WTC11 (cell line): ENCODE measurements at regions of chr12 and their contacts with region 1.

Region 1: DNA sequence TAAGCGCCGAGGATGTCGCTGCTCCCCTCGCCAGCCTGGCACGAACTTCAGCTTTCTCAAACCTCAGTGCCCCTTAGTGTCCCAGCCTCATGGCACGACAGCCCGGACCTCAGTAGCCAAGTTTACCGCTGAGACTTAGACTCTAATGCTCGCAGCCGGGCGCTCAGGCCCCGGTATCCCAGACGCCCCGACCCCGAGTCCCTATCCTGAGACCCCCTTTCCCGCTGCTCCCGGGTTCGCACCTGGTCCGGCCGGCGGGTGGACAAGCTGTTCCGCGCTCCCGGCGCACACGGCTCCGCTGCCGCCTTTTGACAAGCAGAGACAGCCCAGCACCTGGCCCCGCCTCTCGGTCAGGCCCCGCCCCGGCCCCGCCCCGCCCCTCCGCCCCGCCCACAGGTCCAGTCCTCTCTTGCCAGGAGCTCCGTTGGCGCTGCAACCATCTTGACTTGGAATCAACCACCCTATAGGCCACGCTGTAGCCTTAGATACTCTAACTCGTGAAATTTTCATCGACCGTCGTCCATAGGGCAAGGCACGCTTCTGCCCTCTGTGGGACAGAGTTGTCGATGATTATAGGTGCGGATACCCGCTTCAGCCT is at the start of gene VDR:
- DNase-seq: peak; percentile 83
- ATAC-seq: peak; percentile 86
- H3K4me3 Mint-ChIP-seq: peak within 1 kb of the TSS; percentile 73
- H3K27ac Mint-ChIP-seq: peak within 1 kb of the TSS; percentile 89
- H3K4me1 Mint-ChIP-seq: peaks cover 14% of the 10 kb centered on the region
- H3K27me3 Mint-ChIP-seq: peaks cover 92% of the 10 kb centered on the region
- CTCF ChIP-seq: no peak
- total RNA-seq, gene VDR: 0.76 to 1.3 TPM (median 0.76 TPM) in 3 replicates

Region 2: GRCh38 chr12:47870175-47870781 is 34.5 kb before region 1 on chr12:
- CTCF ChIA-PET with region 1: interaction called, 29 read pairs
- POLR2A ChIA-PET with region 1: no interaction called
- DNase-seq: peak; percentile 68
- ATAC-seq: peak; percentile 100
- H3K4me3 Mint-ChIP-seq: no peak overlapping the region
- H3K27ac Mint-ChIP-seq: no peak overlapping the region
- H3K4me1 Mint-ChIP-seq: peaks cover 8% of the 10 kb centered on the region
- H3K27me3 Mint-ChIP-seq: peaks cover 5% of the 10 kb centered on the region
- CTCF ChIP-seq: peak; percentile 24; the same call in 1 of the 2 replicates

Region 3: GRCh38 chr12:47882781-47883546 is 21.8 kb before region 1 on chr12:
- CTCF ChIA-PET with region 1: interaction called, 23 read pairs
- POLR2A ChIA-PET with region 1: no interaction called
- DNase-seq: no peak
- ATAC-seq: peak; percentile 46
- H3K4me3 Mint-ChIP-seq: no peak overlapping the region
- H3K27ac Mint-ChIP-seq: no peak overlapping the region
- H3K4me1 Mint-ChIP-seq: peaks cover 8% of the 10 kb centered on the region
- H3K27me3 Mint-ChIP-seq: no peaks in the 10 kb centered on the region; the same call in 1 of the 2 replicates
- CTCF ChIP-seq: no peak

Region 4: DNA sequence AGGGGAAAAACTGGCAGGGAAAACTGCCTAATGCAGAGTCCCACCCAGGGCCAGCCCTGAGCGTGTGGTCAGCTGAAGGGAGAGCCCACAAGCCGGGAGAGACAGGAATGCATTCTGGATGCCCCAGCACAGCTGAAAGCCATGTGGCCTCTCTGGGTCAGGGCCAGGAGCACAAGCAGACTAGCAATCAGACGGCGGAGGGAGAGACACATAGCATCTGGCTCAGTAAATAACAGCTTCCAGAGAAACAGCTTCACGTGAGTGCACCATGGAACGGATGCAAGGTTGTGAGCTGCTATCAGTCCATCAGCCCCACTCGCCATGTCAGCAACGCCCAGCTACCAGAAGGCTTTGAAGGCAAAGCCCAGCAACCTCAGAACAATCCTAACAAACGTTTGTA is 30.4 kb after region 1 on chr12:
- CTCF ChIA-PET with region 1: interaction called, 34 read pairs
- POLR2A ChIA-PET with region 1: no interaction called
- DNase-seq: no peak
- ATAC-seq: no peak
- H3K4me3 Mint-ChIP-seq: no peak overlapping the region
- H3K27ac Mint-ChIP-seq: no peak overlapping the region
- H3K4me1 Mint-ChIP-seq: no peaks in the 10 kb centered on the region
- H3K27me3 Mint-ChIP-seq: peaks cover 7% of the 10 kb centered on the region; the same call in 1 of the 2 replicates
- CTCF ChIP-seq: no peak

Region 5: GRCh38 chr12:47941851-47942601 is 37.2 kb after region 1 on chr12:
- CTCF ChIA-PET with region 1: interaction called, 34 read pairs
- POLR2A ChIA-PET with region 1: interaction called, 3 read pairs
- DNase-seq: peak; percentile 89
- ATAC-seq: peak; percentile 93
- H3K4me3 Mint-ChIP-seq: peak overlapping the region; percentile 15; the same call in 1 of the 2 replicates
- H3K27ac Mint-ChIP-seq: no peak overlapping the region
- H3K4me1 Mint-ChIP-seq: peaks cover 20% of the 10 kb centered on the region
- H3K27me3 Mint-ChIP-seq: peaks cover 32% of the 10 kb centered on the region
- CTCF ChIP-seq: peak; percentile 48

Region 6: GRCh38 chr12:47949441-47950308 is 44.9 kb after region 1 on chr12:
- CTCF ChIA-PET with region 1: interaction called, 95 read pairs
- POLR2A ChIA-PET with region 1: interaction called, 9 read pairs
- DNase-seq: peak; percentile 85
- ATAC-seq: peak; percentile 94
- H3K4me3 Mint-ChIP-seq: no peak overlapping the region
- H3K27ac Mint-ChIP-seq: no peak overlapping the region
- H3K4me1 Mint-ChIP-seq: peaks cover 13% of the 10 kb centered on the region
- H3K27me3 Mint-ChIP-seq: peaks cover 17% of the 10 kb centered on the region
- CTCF ChIP-seq: peak; percentile 88

Region 7: DNA sequence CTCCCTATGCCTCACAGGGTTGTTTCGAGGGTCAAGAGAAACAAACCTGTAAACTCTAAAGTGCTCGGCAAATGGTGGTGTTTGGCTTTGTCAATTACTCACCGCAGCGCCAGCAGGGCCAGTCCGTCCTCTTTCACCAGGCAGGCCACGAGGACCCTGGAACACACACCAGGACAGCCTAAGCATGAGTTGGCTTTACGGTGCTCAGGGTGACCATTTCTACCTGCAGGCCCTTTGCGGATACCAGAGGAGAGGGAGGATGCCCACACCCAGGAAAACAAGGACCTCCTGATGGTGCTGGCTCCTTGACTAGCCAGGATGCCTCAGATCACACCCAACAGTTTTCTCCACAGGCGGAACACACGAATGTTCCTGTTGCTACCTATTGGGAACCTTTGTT is 88.0 kb after region 1 on chr12:
- CTCF ChIA-PET with region 1: no interaction called
- POLR2A ChIA-PET with region 1: no interaction called
- DNase-seq: no peak
- ATAC-seq: no peak
- H3K4me3 Mint-ChIP-seq: no peak overlapping the region
- H3K27ac Mint-ChIP-seq: no peak overlapping the region
- H3K4me1 Mint-ChIP-seq: peaks cover 12% of the 10 kb centered on the region
- H3K27me3 Mint-ChIP-seq: peaks cover 80% of the 10 kb centered on the region
- CTCF ChIP-seq: no peak

Region 8: DNA sequence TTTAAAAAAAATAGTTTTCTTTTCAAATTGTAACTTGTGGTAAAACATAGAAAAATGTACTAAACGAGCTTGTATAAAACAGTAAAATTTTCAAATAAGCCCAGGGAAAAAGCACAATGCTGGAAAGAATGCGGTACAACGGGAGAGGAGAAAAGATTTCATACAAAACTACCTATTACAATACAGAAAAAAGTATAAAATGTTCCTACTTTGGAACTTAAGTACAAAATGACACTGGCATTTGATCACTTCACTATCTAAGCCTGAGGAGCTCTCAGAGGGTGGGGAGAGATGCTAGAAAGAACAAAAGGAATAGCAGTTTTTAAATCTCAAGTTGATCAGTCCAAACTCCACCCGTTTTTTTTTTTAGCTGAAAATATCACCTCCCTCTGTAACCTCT is 139.0 kb after region 1 on chr12:
- CTCF ChIA-PET with region 1: no interaction called
- POLR2A ChIA-PET with region 1: no interaction called
- DNase-seq: no peak
- ATAC-seq: no peak
- H3K4me3 Mint-ChIP-seq: no peak overlapping the region
- H3K27ac Mint-ChIP-seq: no peak overlapping the region
- H3K4me1 Mint-ChIP-seq: peaks cover 6% of the 10 kb centered on the region
- H3K27me3 Mint-ChIP-seq: peaks cover 13% of the 10 kb centered on the region
- CTCF ChIP-seq: no peak

Region 9: GRCh38 chr12:48183091-48183875 is 278.5 kb after region 1 on chr12 and contains the start of gene CCDC184:
- CTCF ChIA-PET with region 1: interaction called, 14 read pairs
- POLR2A ChIA-PET with region 1: no interaction called
- DNase-seq: peak; percentile 74
- ATAC-seq: peak; percentile 85
- H3K4me3 Mint-ChIP-seq: peak within 1 kb of the TSS; percentile 81
- H3K27ac Mint-ChIP-seq: peak within 1 kb of the TSS; percentile 51
- H3K4me1 Mint-ChIP-seq: peaks cover 29% of the 10 kb centered on the region
- H3K27me3 Mint-ChIP-seq: peaks cover 99% of the 10 kb centered on the region
- CTCF ChIP-seq: no peak
- total RNA-seq, gene CCDC184: 1.4 to 1.6 TPM (median 1.5 TPM) in 3 replicates